ENCODE measurements at regions of chr6 and their contacts with region 1.

Region 1: DNA sequence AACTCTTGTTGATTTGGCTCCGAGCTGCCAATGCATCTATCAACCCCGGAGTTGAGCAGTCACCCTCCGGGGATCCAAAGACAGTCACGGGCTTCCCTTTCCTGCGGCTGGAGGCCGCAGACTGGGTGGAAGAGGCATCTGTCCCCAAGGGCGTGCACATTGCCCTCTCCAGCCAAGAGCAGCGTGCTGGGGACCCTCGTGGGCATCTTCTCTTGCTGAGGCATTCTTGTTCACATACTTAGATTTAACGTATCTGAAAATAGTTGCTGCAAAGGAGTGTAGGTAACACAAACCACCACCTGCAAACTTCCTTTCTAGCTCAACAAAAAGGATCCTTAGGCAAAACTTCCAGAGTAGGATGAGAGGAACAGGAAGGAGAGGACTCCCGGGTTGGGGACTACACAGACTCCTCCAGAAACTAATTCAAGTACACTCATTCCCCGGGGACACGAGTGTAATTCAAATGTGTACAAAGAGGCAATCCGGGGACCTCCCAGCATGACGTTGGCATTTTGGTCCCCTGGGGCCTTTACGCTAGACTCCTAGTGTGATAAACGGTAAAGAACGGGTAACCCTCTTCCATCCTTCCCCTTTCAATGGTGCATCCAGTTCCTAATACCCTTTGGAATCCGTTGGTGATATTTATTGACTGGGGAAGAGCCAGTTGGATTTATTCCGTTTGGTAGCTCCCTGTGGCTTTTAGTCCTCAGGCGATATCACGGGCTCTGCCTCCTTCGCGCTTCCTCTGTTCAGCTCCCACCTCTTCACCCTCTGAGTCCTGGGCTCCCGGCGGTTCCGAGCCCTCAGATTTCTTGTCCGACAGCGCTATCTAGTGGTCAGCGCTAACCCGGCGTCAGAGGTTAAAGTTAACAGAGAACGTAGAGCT is 2.7 kb upstream of the COL12A1 start:
- DNase-seq: peak; percentile 49 to 62
- ATAC-seq: peak; percentile 36 to 77
- H3K4me3 ChIP-seq: 0 out of 3 replicates have a peak overlapping the region, but pooled peaks have one; percentile 11
- H3K27ac ChIP-seq: 0 out of 6 replicates have a peak overlapping the region, but pooled peaks of 1 of the 2 experiments have one; percentile 48
- H3K4me1 ChIP-seq: peaks cover 10% of the 10 kb centered on the region; the same call in 2 of the 3 replicates
- CTCF ChIP-seq: peak; percentile 83
- EP300 ChIP-seq: no peak
- POLR2A ChIP-seq: no peak
- RAD21 ChIP-seq: peak; percentile 93

Region 2: DNA sequence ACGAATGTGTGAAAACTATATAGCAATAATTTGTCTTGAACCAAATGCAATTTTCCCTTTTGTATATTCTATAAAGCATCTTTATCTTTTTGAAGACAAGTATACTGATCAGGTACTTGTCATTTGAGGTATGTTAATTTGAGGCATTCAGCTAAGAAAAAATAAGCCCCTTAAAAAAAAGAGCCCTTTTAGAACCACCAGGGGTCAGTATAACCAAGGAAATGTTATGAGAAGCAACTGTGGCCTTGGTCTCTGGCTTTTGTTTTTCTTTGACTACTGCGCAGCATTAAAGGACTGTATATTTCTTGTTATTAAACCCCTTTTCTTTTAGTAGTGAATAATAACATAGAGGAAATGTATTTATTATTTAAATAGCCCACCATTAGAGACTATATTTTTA is 1469.4 kb before region 1 on chr6:
- CTCF ChIA-PET with region 1: interaction called, 86 read pairs
- POLR2A ChIA-PET with region 1: no interaction called
- DNase-seq: peak; percentile 3 to 56
- ATAC-seq: peak; percentile 56 to 72; a peak in 4 of 6 replicates
- H3K4me3 ChIP-seq: no peak overlapping the region
- H3K27ac ChIP-seq: no peak overlapping the region
- H3K4me1 ChIP-seq: no peaks in the 10 kb centered on the region
- CTCF ChIP-seq: peak; percentile 75
- EP300 ChIP-seq: no peak
- POLR2A ChIP-seq: no peak
- RAD21 ChIP-seq: peak; percentile 75 to 78

Region 3: DNA sequence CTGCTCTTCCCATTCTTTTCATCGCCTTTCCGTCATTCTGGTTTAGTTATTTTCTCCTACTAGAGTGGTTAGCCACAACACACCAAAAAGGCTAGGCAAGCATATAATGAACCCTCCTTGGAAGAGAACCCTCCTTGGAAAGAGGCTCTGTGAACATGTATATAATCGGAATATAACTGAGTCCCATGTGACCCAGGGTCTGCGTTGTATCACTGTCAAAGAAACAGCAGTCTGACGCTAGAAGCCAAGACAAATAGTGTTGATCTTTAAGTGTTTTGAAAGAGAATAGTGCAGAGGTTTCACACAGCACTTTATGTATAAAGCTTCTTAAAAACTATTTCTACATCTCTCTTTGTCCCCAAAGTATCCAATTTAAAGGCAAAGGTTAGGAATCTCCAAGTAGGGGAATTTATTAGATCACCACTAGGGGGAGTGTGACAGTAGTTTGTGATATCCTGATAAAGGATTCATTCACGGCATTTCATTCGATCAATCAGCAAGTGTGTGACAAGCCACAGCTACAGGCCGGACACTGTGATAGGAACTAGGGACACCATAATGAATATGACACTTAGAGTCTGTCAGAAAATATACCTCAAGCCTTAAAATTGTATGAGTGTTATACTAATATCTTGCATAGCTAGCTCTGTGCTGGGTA is 1117.3 kb before region 1 on chr6:
- CTCF ChIA-PET with region 1: interaction called, 84 read pairs
- POLR2A ChIA-PET with region 1: interaction called, 3 read pairs
- DNase-seq: peak; percentile 4 to 32
- ATAC-seq: peak; percentile 39 to 69; a peak in 3 of 6 replicates
- H3K4me3 ChIP-seq: no peak overlapping the region
- H3K27ac ChIP-seq: no peak overlapping the region
- H3K4me1 ChIP-seq: no peaks in the 10 kb centered on the region
- CTCF ChIP-seq: peak; percentile 61
- EP300 ChIP-seq: no peak
- POLR2A ChIP-seq: no peak
- RAD21 ChIP-seq: peak; percentile 39 to 46; a peak in 4 of 5 replicates

Region 4: GRCh38 chr6:74409447-74409846 is 799.1 kb before region 1 on chr6:
- CTCF ChIA-PET with region 1: interaction called, 54 read pairs
- POLR2A ChIA-PET with region 1: interaction called, 4 read pairs
- DNase-seq: peak; percentile 0 to 55
- ATAC-seq: peak; percentile 68 to 74; a peak in 5 of 6 replicates
- H3K4me3 ChIP-seq: no peak overlapping the region
- H3K27ac ChIP-seq: no peak overlapping the region
- H3K4me1 ChIP-seq: no peaks in the 10 kb centered on the region
- CTCF ChIP-seq: peak; percentile 67
- EP300 ChIP-seq: no peak
- POLR2A ChIP-seq: no peak
- RAD21 ChIP-seq: peak; percentile 85 to 91

Region 5: DNA sequence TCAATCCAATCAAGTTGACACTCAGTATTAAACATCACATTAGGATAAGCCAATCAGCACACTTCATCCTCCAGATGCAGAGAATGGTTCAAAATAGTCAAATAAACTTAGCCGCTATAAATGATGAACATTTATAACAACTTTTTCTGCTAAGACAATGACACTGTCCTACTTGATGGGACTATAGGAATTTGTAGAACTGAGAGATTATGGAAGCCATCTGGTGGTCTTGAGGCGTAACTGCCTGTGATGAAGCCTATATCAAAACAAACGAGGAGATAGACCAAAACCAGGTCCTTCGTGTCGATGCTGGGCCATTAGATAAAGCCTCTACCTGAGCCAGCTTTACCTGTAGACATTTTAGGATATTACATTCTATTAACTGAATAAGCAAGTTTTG is 633.7 kb before region 1 on chr6:
- CTCF ChIA-PET with region 1: interaction called, 13 read pairs
- POLR2A ChIA-PET with region 1: no interaction called
- DNase-seq: peak in 1 of 2 experiments; percentile 50
- ATAC-seq: peak; percentile 78 to 85
- H3K4me3 ChIP-seq: no peak overlapping the region
- H3K27ac ChIP-seq: no peak overlapping the region
- H3K4me1 ChIP-seq: peaks cover 19% of the 10 kb centered on the region
- CTCF ChIP-seq: peak; percentile 40
- EP300 ChIP-seq: no peak
- POLR2A ChIP-seq: no peak
- RAD21 ChIP-seq: peak; percentile 55 to 66

Region 6: DNA sequence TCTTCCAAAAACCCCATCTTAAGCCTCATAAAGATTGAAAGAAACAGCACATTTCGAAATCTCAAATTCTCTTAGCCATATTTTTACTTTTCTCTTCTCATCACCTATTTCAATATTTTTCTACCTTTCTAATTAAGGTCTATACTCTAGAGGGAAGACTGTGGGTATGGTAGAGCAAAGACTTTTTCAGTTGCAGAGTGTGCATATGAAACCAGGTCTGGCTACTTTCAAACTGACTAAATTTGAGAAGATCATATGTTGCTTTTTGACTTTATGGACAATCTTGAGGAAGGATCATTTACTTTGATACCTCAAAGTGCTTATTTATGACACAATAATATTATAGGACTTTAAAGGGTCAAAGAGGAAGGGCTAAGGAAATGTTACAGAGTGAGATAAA is 264.3 kb after region 1 on chr6:
- CTCF ChIA-PET with region 1: no interaction called
- POLR2A ChIA-PET with region 1: no interaction called
- DNase-seq: no peak
- ATAC-seq: no peak
- H3K4me3 ChIP-seq: no peak overlapping the region
- H3K27ac ChIP-seq: no peak overlapping the region
- H3K4me1 ChIP-seq: no peaks in the 10 kb centered on the region
- CTCF ChIP-seq: no peak
- EP300 ChIP-seq: no peak
- POLR2A ChIP-seq: no peak
- RAD21 ChIP-seq: no peak

Measured in A549 (cell line).